ENCODE measurements at regions of chr3 and their contacts with region 1.

Region 1: DNA sequence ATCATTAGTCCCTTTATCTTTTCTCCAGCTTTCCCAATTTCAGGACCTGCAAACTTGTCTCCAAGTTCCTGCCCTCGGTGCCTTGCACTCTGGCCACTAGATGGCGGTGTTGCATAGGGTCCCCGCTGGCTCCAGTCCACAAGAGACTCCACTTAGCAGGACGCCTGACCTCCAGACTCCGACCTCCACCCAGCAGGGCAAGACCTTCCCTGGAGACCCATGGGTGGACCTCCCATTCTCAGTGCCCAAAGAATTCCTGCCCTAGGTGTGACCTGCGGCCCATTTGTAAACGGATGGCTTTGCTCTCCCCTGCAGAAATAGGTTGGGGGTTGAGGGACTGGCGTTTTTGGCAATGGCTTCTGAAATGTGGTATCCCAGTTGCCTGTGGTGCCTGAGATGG is 82.6 kb downstream of the LSM3 start:
- DNase-seq: peak; percentile 14
- H3K4me3 ChIP-seq: no peak overlapping the region
- H3K27me3 ChIP-seq: no peaks in the 10 kb centered on the region; the same call in 1 of the 2 replicates
- CTCF ChIP-seq: peak; percentile 98

Region 2: GRCh38 chr3:14188041-14188754 is 73.0 kb before region 1 on chr3:
- CTCF ChIA-PET with region 1: no interaction called
- POLR2A ChIA-PET with region 1: no interaction called
- DNase-seq: no peak
- H3K4me3 ChIP-seq: no peak overlapping the region
- H3K27me3 ChIP-seq: no peaks in the 10 kb centered on the region
- CTCF ChIP-seq: no peak

Region 3: GRCh38 chr3:14234251-14235002 is 26.8 kb before region 1 on chr3:
- CTCF ChIA-PET with region 1: interaction called, 14 read pairs
- POLR2A ChIA-PET with region 1: no interaction called
- DNase-seq: no peak
- H3K4me3 ChIP-seq: no peak overlapping the region
- H3K27me3 ChIP-seq: no peaks in the 10 kb centered on the region
- CTCF ChIP-seq: no peak

Region 4: DNA sequence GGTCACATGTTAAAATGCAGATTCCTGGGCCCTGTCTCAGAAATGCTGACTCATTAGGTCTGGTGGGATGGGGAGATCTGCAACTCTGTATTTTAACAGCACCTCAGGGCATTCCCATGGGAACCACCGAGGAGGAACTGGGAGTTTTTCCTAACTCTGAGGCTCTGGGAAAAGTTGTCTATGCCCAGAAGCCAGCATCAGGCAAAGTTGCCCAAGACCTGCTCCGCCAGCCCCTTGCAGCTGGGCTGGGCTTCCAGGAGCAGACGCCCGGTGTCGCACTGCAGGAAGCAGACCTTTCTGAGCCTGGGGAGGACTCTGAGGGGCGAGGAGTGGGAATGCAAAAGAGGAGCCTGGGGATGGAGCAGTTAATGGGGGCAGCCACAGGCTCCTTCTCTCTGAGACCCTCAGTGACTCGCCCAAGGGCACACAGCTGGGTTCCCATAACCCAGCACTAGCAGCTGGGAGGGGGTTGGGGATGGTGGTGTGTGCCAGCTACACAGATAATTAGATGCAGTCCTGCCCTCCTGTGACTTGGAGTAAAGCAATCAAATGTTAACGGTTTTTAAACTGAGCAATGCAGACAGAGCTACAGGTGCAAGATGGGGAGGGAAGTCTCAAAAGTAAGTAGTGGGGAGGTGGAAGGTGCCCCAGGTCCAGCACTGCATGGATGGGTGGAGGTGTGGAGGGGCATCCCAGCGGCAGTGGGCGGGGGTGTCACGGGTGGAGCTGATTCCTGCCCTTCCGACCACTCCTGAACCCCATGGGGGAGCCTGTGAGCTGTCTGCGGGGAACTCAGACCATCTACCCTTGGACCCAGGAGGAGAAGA is 17.8 kb after region 1 on chr3:
- CTCF ChIA-PET with region 1: interaction called, 18 read pairs
- POLR2A ChIA-PET with region 1: no interaction called
- DNase-seq: no peak
- H3K4me3 ChIP-seq: no peak overlapping the region
- H3K27me3 ChIP-seq: no peaks in the 10 kb centered on the region
- CTCF ChIP-seq: no peak

Region 5: GRCh38 chr3:14329116-14329830 is 68.0 kb after region 1 on chr3:
- CTCF ChIA-PET with region 1: no interaction called
- POLR2A ChIA-PET with region 1: no interaction called
- DNase-seq: no peak
- H3K4me3 ChIP-seq: no peak overlapping the region
- H3K27me3 ChIP-seq: no peaks in the 10 kb centered on the region
- CTCF ChIP-seq: no peak

Region 6: GRCh38 chr3:14461748-14462324 is 200.6 kb after region 1 on chr3:
- CTCF ChIA-PET with region 1: interaction called, 29 read pairs
- POLR2A ChIA-PET with region 1: no interaction called
- DNase-seq: no peak
- H3K4me3 ChIP-seq: no peak overlapping the region
- H3K27me3 ChIP-seq: no peaks in the 10 kb centered on the region
- CTCF ChIP-seq: peak; percentile 66

Region 7: GRCh38 chr3:14548321-14548729 is 287.1 kb after region 1 on chr3:
- CTCF ChIA-PET with region 1: interaction called, 17 read pairs
- POLR2A ChIA-PET with region 1: no interaction called
- DNase-seq: no peak
- H3K4me3 ChIP-seq: no peak overlapping the region
- H3K27me3 ChIP-seq: peaks cover 7% of the 10 kb centered on the region
- CTCF ChIP-seq: peak; percentile 84

Region 8: GRCh38 chr3:15098503-15099363 is 837.5 kb after region 1 on chr3 and contains the start of gene RBSN:
- CTCF ChIA-PET with region 1: no interaction called
- POLR2A ChIA-PET with region 1: no interaction called
- DNase-seq: peak; percentile 52
- H3K4me3 ChIP-seq: peak within 1 kb of the TSS; percentile 91
- H3K27me3 ChIP-seq: no peaks in the 10 kb centered on the region
- CTCF ChIP-seq: no peak
- polyA plus RNA-seq, gene RBSN: 10.8 and 11.6 TPM in 2 replicates